CD4-positive, alpha-beta T cell (primary cell): ENCODE measurements at regions of chr6 and their contacts with region 1.

Region 1: DNA sequence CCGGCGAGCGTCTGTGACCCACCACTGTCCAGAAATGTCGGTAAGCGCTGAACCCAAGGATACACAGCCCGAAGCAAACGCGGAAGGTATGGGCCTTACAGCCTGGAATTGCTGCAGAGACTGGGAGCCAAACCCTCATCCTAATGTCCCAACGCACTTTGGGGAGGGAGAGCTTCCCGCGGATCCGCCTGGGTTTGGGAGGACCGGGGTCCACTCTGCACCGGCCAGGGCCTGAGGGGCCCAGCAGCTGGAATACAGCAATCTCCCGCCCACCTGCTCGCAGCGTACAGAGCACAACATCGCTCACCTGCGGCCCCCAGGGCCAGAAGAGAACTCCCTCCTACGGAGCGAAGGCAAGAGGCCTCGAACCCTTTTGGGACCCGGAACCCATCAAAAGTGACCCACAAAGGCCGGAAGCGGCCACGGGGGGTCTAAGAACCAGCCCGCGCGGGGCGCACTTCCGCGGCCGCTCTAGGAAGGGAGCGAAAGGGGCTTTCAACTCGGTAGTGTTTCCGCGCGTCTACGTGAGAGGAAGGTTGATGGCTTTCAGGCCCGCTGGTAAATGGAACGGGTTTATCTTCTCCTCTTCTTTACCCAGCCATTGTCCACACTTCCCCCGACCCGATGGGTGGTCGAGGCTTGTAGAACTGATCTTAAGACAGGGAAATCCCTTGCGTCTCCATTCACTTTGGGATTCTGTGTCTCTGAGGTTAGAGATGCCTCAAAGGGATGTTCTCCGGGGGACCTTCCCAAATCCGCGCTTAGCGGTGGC is at the start of gene ZSCAN12:
- DNase-seq: peak; percentile 70 to 90 (median 82)
- ATAC-seq: peak; percentile 92
- H3K4me3 ChIP-seq: peak within 1 kb of the TSS; percentile 69
- H3K4me3 Mint-ChIP-seq: peak within 1 kb of the TSS; percentile 97
- H3K27ac ChIP-seq: peak within 1 kb of the TSS; percentile 23 to 49
- H3K27ac Mint-ChIP-seq: peak within 1 kb of the TSS; percentile 86
- H3K4me1 ChIP-seq: peaks cover 20% of the 10 kb centered on the region
- H3K4me1 Mint-ChIP-seq: peaks cover 55% of the 10 kb centered on the region
- H3K27me3 ChIP-seq: no peaks in the 10 kb centered on the region
- H3K27me3 Mint-ChIP-seq: peaks cover 32% of the 10 kb centered on the region
- CTCF ChIP-seq: peak; percentile 70
- total RNA-seq, gene ZSCAN12: 2.0 to 2.3 TPM

Region 2: GRCh38 chr6:28349892-28350737 is 49.4 kb before region 1 on chr6 and contains the start of gene ZKSCAN3:
- CTCF ChIA-PET with region 1: no interaction called
- POLR2A ChIA-PET with region 1: no interaction called
- intact Hi-C with region 1: loop called (anchors 1 to 2 kb)
- DNase-seq: peak; percentile 65 to 89 (median 80)
- ATAC-seq: peak; percentile 100
- H3K4me3 ChIP-seq: peak within 1 kb of the TSS; percentile 73
- H3K4me3 Mint-ChIP-seq: peak within 1 kb of the TSS; percentile 99
- H3K27ac ChIP-seq: peak within 1 kb of the TSS in 1 of 2 donors; percentile 46
- H3K27ac Mint-ChIP-seq: peak within 1 kb of the TSS; percentile 85
- H3K4me1 ChIP-seq: peaks cover 13% of the 10 kb centered on the region
- H3K4me1 Mint-ChIP-seq: peaks cover 43% of the 10 kb centered on the region
- H3K27me3 ChIP-seq: peaks cover 0 to 11% of the 10 kb centered on the region in 2 experiments
- H3K27me3 Mint-ChIP-seq: peaks cover 27% of the 10 kb centered on the region
- CTCF ChIP-seq: no peak
- total RNA-seq, gene ZKSCAN3: 0.88 to 0.89 TPM

Region 3: DNA sequence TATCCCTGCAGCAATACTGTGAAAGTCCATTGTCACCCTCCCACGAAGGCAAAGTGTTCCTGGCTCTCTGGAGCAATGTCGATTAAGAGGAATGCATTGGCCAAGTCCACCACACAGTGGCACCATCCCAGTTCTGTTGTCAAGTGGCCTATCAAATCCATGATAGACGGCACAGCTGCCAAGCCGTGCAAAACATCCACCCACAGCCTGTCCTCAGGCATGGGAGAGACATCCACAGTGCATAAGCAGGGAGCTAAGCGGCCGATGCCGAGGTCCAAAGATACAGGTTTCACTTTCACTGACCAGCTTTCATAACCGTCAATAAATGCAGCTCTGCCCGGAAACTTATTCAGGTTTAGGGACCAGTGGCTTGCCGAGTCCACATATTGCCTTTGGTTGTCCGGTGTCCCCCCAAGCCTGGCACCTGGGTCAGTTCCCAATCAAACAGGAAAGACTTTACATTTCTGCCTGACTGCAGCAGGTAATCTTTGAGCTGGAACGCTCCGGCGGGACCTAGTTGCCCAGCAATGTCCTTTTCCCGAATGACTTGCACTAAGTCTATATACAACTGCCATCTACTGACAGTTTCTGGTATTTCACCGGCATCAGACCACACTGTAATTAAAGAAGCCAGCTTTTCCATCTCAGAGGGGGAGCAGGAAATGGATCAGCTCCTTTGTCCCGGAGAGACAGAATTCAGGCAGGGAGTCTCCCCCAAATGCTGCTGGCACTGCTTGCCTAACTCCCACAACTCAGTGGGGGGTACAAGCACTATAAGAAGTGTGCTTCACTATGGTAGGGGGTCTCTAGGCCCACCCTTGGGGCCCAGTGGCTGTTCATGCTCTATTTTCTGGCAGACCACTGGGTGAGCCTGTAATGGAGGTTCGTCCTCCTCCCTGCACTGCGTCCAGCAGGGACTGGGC is 43.5 kb before region 1 on chr6:
- CTCF ChIA-PET with region 1: interaction called, 5 read pairs
- POLR2A ChIA-PET with region 1: no interaction called
- intact Hi-C with region 1: loop called in 1 of 2 experiments (anchors 2 kb)
- DNase-seq: peak; percentile 26 to 84 (median 42)
- ATAC-seq: peak; percentile 93
- H3K4me3 ChIP-seq: peak overlapping the region; percentile 64
- H3K4me3 Mint-ChIP-seq: peak overlapping the region; percentile 90
- H3K27ac ChIP-seq: no peak overlapping the region
- H3K27ac Mint-ChIP-seq: peak overlapping the region; percentile 22
- H3K4me1 ChIP-seq: peaks cover 21% of the 10 kb centered on the region
- H3K4me1 Mint-ChIP-seq: peaks cover 42% of the 10 kb centered on the region
- H3K27me3 ChIP-seq: no peaks in the 10 kb centered on the region
- H3K27me3 Mint-ChIP-seq: no peaks in the 10 kb centered on the region
- CTCF ChIP-seq: peak; percentile 77

Region 4: DNA sequence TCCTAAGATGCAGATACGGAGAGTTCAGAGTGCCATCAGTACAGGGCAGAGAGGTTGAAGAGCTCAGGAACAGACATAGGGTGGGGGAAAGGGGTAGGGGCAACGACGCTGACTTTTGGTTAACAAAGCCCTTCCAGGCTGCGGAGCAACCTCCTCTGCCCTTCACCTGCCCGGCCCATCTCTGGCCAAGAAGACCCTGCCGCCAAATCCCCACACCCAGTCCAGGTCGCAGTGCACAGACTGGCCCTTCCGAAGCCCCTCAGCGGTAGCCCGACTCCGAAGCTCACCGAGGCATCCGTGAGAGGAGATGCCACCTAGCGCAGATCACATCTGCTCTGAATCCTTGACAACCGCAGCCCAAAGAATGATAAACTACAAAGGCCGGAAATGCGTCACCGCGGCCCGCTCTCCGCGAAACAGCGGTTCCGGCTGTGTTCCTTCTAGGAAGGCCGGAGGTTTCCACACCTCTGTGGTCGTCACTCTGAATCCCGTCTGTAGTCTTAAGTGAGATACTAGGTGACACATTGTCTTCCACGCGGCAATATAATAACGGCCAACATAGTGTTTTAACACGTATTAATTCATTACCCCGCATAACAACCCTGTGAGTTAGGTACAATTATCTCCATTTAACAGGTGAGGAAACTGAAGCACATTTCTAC is 43.7 kb after region 1 on chr6 and contains the start of gene ZSCAN23:
- CTCF ChIA-PET with region 1: interaction called, 5 read pairs
- POLR2A ChIA-PET with region 1: interaction called, 4 read pairs
- intact Hi-C with region 1: loop called (anchors 1 to 2 kb)
- DNase-seq: peak; percentile 68 to 94 (median 80)
- ATAC-seq: peak; percentile 91
- H3K4me3 ChIP-seq: peak within 1 kb of the TSS; percentile 53
- H3K4me3 Mint-ChIP-seq: peak within 1 kb of the TSS; percentile 96
- H3K27ac ChIP-seq: no peak within 1 kb of the TSS
- H3K27ac Mint-ChIP-seq: peak within 1 kb of the TSS; percentile 77
- H3K4me1 ChIP-seq: peaks cover 19% of the 10 kb centered on the region
- H3K4me1 Mint-ChIP-seq: peaks cover 34% of the 10 kb centered on the region
- H3K27me3 ChIP-seq: peaks cover 19 to 28% of the 10 kb centered on the region in 2 experiments
- H3K27me3 Mint-ChIP-seq: peaks cover 37% of the 10 kb centered on the region
- CTCF ChIP-seq: no peak
- total RNA-seq, gene ZSCAN23: 0.19 to 0.78 TPM

Region 5: GRCh38 chr6:28542440-28543296 is 143.1 kb after region 1 on chr6:
- CTCF ChIA-PET with region 1: no interaction called
- POLR2A ChIA-PET with region 1: interaction called, 4 read pairs
- intact Hi-C with region 1: loop called (anchors 2 to 5 kb)
- DNase-seq: peak in 13 of 14 experiments; percentile 20 to 81 (median 50)
- ATAC-seq: peak; percentile 71
- H3K4me3 ChIP-seq: peak overlapping the region; percentile 55
- H3K4me3 Mint-ChIP-seq: peak overlapping the region; percentile 94
- H3K27ac ChIP-seq: no peak overlapping the region
- H3K27ac Mint-ChIP-seq: peak overlapping the region; percentile 92
- H3K4me1 ChIP-seq: peaks cover 18% of the 10 kb centered on the region
- H3K4me1 Mint-ChIP-seq: peaks cover 42% of the 10 kb centered on the region
- H3K27me3 ChIP-seq: peaks cover 8 to 18% of the 10 kb centered on the region in 2 experiments
- H3K27me3 Mint-ChIP-seq: peaks cover 61% of the 10 kb centered on the region
- CTCF ChIP-seq: peak; percentile 39

Region 6: DNA sequence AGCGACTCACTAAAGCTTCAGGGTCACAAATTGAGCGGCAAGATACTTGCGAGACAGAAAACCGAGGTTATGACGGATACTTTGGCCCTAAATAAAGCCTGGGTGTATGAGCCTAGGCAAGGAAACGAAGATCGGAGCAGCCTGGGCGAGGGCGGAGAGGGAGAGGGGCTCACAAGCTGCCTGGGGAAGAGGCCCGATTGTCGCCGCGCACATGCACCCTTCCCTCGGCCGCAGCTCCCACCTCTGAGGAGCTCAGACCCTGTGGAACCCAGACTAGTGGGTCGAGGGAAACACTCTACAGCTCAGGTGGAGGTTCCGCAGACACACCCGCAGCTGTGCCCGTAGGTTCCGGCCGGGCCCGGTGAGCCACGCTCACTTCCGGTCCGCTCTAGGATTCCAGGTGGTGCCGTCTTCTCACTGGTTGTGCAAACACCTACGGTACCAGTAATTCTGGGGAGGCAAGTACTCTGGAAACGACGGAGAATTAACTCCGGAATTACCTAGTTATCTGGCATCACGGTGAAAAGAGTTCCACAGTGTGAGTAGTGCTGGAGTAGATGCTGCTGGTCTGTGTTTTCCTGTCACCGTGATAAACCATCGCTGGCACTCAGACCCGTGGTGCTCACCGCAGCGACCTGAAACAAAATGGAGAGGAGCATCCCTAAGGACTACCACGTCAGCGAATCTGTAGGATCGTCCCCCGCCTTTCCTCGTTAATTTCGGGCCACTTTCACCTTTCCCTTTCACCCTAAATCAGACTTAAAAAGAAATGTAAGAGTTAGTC is 187.6 kb after region 1 on chr6:
- CTCF ChIA-PET with region 1: no interaction called
- POLR2A ChIA-PET with region 1: no interaction called
- intact Hi-C with region 1: loop called (anchors 5 kb)
- DNase-seq: peak; percentile 28 to 73 (median 57)
- ATAC-seq: peak; percentile 82
- H3K4me3 ChIP-seq: peak overlapping the region; percentile 66
- H3K4me3 Mint-ChIP-seq: peak overlapping the region; percentile 90
- H3K27ac ChIP-seq: no peak overlapping the region
- H3K27ac Mint-ChIP-seq: peak overlapping the region; percentile 55
- H3K4me1 ChIP-seq: peaks cover 22% of the 10 kb centered on the region
- H3K4me1 Mint-ChIP-seq: peaks cover 31% of the 10 kb centered on the region
- H3K27me3 ChIP-seq: peaks cover 60 to 80% of the 10 kb centered on the region in 2 experiments
- H3K27me3 Mint-ChIP-seq: peaks cover 83% of the 10 kb centered on the region
- CTCF ChIP-seq: no peak

Region 7: DNA sequence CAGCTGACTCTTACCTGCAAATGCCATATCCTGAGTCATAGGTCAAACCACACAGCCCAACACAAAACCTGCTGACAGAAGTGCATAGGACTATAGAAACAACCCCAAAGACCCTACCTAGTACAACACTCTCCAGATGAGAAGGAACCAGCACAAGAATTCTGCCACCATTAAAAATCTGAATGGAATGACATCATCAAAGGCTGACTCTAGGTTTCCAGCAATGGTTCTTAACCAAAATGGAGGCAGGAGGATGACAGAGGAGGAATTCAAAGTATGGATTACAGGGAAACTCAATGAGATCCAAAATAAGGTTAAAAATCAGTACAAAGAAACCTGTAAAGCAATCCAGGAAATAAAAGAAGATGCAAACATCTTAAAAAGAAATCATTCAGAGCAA is 933.1 kb after region 1 on chr6:
- CTCF ChIA-PET with region 1: no interaction called
- POLR2A ChIA-PET with region 1: no interaction called
- intact Hi-C with region 1: no loop called
- DNase-seq: no peak
- ATAC-seq: no peak
- H3K4me3 ChIP-seq: no peak overlapping the region
- H3K4me3 Mint-ChIP-seq: no peak overlapping the region
- H3K27ac ChIP-seq: no peak overlapping the region
- H3K27ac Mint-ChIP-seq: no peak overlapping the region
- H3K4me1 ChIP-seq: no peaks in the 10 kb centered on the region
- H3K4me1 Mint-ChIP-seq: no peaks in the 10 kb centered on the region
- H3K27me3 ChIP-seq: peaks cover 10 to 23% of the 10 kb centered on the region in 2 experiments
- H3K27me3 Mint-ChIP-seq: peaks cover 73% of the 10 kb centered on the region
- CTCF ChIP-seq: no peak